ENCODE measurements at regions of chr1 and their contacts with region 1.

Region 1: DNA sequence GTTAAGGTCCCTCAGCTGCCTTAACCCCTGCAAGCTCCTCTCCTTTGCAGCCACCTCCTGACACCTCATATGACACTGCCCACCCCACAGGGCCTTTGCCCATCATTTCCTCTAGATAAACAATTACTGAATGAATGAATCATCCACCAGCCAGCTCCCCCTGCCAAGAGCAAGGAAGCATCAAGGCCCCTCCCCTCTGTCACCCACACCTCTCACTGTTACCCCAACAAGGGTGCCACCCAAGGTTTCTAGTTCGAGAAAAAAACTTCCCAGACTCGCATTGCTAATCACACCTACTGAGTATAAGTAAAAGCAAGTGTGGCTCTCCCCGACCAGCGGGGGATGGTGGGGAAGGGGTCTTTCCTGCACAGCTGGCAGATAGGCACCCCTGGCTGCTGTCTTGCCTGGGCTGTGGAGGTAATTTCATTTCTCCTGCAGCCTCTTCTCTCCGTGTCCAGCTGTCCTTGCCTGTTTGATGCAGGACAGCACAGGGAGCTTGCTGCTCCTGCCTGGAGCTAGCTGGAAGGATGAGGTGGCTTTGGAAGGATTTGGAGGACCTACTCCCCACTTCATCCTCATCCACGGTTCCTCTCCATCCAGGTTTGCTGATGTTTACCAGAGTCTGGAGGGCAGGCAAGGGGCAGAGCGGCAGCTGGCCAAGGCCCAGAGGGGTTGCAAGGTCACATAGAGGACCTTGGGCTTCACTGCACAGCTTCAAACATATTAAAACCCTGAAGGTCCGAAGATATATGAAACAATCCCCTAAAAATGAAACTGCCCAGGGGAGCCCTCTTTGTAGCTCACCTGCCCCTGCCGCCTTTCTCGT is 33.1 kb upstream of the LBR start:
- DNase-seq: peak in 9 of 14 experiments; percentile 21 to 87 (median 46)
- ATAC-seq: peak; percentile 74
- H3K4me3 ChIP-seq: no peak overlapping the region
- H3K4me3 Mint-ChIP-seq: no peak overlapping the region
- H3K27ac ChIP-seq: no peak overlapping the region
- H3K27ac Mint-ChIP-seq: peak overlapping the region; percentile 31
- H3K4me1 ChIP-seq: peaks cover 43% of the 10 kb centered on the region
- H3K4me1 Mint-ChIP-seq: peaks cover 30% of the 10 kb centered on the region
- H3K27me3 ChIP-seq: no peaks in the 10 kb centered on the region
- H3K27me3 Mint-ChIP-seq: no peaks in the 10 kb centered on the region
- CTCF ChIP-seq: no peak

Region 2: GRCh38 chr1:225378880-225379279 is 82.1 kb before region 1 on chr1:
- CTCF ChIA-PET with region 1: no interaction called
- POLR2A ChIA-PET with region 1: no interaction called
- intact Hi-C with region 1: no loop called
- DNase-seq: no peak
- ATAC-seq: no peak
- H3K4me3 ChIP-seq: no peak overlapping the region
- H3K4me3 Mint-ChIP-seq: no peak overlapping the region
- H3K27ac ChIP-seq: no peak overlapping the region
- H3K27ac Mint-ChIP-seq: no peak overlapping the region
- H3K4me1 ChIP-seq: no peaks in the 10 kb centered on the region
- H3K4me1 Mint-ChIP-seq: peaks cover 4% of the 10 kb centered on the region
- H3K27me3 ChIP-seq: no peaks in the 10 kb centered on the region
- H3K27me3 Mint-ChIP-seq: no peaks in the 10 kb centered on the region
- CTCF ChIP-seq: no peak

Region 3: GRCh38 chr1:225447650-225448089 is 13.3 kb before region 1 on chr1:
- CTCF ChIA-PET with region 1: interaction called, 5 read pairs
- POLR2A ChIA-PET with region 1: interaction called, 16 read pairs
- intact Hi-C with region 1: loop called in 1 of 2 experiments (anchors 1 kb)
- DNase-seq: no peak
- ATAC-seq: no peak
- H3K4me3 ChIP-seq: no peak overlapping the region
- H3K4me3 Mint-ChIP-seq: no peak overlapping the region
- H3K27ac ChIP-seq: no peak overlapping the region
- H3K27ac Mint-ChIP-seq: peak overlapping the region; percentile 51
- H3K4me1 ChIP-seq: peaks cover 59% of the 10 kb centered on the region
- H3K4me1 Mint-ChIP-seq: peaks cover 49% of the 10 kb centered on the region
- H3K27me3 ChIP-seq: no peaks in the 10 kb centered on the region
- H3K27me3 Mint-ChIP-seq: no peaks in the 10 kb centered on the region
- CTCF ChIP-seq: no peak